Activated CD4-positive, alpha-beta T cell treated with anti-CD3 and anti-CD28 coated beads for 36 hours (primary cell): ENCODE measurements at regions of chr5 and their contacts with region 1.

Region 1: GRCh38 chr5:157328277-157328912 is 62.5 kb downstream of the CYFIP2 start:
- DNase-seq: peak; percentile 77
- ATAC-seq: peak; percentile 97
- H3K4me3 Mint-ChIP-seq: peak overlapping the region; percentile 9
- H3K27ac Mint-ChIP-seq: peak overlapping the region; percentile 85
- H3K4me1 Mint-ChIP-seq: peaks cover 50% of the 10 kb centered on the region
- H3K27me3 Mint-ChIP-seq: no peaks in the 10 kb centered on the region

Region 2: GRCh38 chr5:155987265-155987810 is 1341.1 kb before region 1 on chr5:
- CTCF ChIA-PET with region 1: no interaction called
- POLR2A ChIA-PET with region 1: no interaction called
- intact Hi-C with region 1: no loop called
- DNase-seq: no peak
- ATAC-seq: no peak
- H3K4me3 Mint-ChIP-seq: no peak overlapping the region
- H3K27ac Mint-ChIP-seq: no peak overlapping the region
- H3K4me1 Mint-ChIP-seq: no peaks in the 10 kb centered on the region
- H3K27me3 Mint-ChIP-seq: peaks cover 5% of the 10 kb centered on the region

Region 3: DNA sequence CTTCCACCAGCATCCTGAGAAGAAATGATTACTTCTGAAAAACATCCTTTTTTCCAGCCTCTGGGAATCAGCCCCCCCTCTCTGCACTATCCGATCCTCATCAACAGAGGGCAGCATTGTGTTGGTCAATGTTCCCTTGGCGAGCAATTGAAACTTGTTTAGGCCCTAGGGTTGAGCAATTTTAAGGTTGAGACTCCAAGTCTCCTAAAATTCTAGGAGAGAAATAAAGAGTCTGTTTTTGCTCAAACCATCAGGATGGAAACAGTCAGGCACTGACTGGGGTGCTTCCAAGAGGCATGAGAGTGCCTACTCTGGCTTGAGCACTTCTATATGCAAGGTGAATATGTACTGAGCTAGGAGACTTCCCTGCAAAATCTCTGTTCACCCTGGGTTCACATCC is 74.8 kb before region 1 on chr5:
- CTCF ChIA-PET with region 1: interaction called, 10 read pairs
- POLR2A ChIA-PET with region 1: no interaction called
- intact Hi-C with region 1: no loop called
- DNase-seq: no peak
- ATAC-seq: no peak
- H3K4me3 Mint-ChIP-seq: peak overlapping the region; percentile 10
- H3K27ac Mint-ChIP-seq: peak overlapping the region; percentile 89
- H3K4me1 Mint-ChIP-seq: peaks cover 96% of the 10 kb centered on the region
- H3K27me3 Mint-ChIP-seq: no peaks in the 10 kb centered on the region

Region 4: GRCh38 chr5:157312492-157312891 is 15.9 kb before region 1 on chr5:
- CTCF ChIA-PET with region 1: interaction called, 15 read pairs
- POLR2A ChIA-PET with region 1: no interaction called
- intact Hi-C with region 1: no loop called
- DNase-seq: peak; percentile 76
- ATAC-seq: peak; percentile 95
- H3K4me3 Mint-ChIP-seq: no peak overlapping the region
- H3K27ac Mint-ChIP-seq: peak overlapping the region; percentile 83
- H3K4me1 Mint-ChIP-seq: peaks cover 36% of the 10 kb centered on the region
- H3K27me3 Mint-ChIP-seq: no peaks in the 10 kb centered on the region

Region 5: DNA sequence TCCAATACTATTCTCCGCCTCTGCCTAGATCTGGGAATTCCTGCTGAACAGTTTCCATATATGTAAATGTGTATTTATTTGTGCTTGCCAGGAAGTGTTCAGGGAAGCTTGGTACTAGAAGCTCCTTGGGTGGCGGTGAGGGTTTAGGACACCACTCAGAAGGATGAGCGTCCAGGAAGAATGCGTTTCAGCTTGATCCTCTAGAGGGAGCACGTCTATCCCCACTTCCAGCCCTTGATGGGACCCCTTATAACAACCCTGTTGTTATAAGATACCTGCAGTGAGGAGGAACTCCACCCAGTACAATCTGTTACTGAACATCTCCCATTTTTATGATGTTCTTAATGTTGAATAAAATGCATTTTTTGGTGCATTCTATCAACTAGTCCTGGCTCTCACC is 26.4 kb after region 1 on chr5:
- CTCF ChIA-PET with region 1: interaction called, 12 read pairs
- POLR2A ChIA-PET with region 1: interaction called, 3 read pairs
- intact Hi-C with region 1: no loop called
- DNase-seq: no peak
- ATAC-seq: no peak
- H3K4me3 Mint-ChIP-seq: no peak overlapping the region
- H3K27ac Mint-ChIP-seq: peak overlapping the region; percentile 22
- H3K4me1 Mint-ChIP-seq: peaks cover 53% of the 10 kb centered on the region
- H3K27me3 Mint-ChIP-seq: no peaks in the 10 kb centered on the region

Region 6: DNA sequence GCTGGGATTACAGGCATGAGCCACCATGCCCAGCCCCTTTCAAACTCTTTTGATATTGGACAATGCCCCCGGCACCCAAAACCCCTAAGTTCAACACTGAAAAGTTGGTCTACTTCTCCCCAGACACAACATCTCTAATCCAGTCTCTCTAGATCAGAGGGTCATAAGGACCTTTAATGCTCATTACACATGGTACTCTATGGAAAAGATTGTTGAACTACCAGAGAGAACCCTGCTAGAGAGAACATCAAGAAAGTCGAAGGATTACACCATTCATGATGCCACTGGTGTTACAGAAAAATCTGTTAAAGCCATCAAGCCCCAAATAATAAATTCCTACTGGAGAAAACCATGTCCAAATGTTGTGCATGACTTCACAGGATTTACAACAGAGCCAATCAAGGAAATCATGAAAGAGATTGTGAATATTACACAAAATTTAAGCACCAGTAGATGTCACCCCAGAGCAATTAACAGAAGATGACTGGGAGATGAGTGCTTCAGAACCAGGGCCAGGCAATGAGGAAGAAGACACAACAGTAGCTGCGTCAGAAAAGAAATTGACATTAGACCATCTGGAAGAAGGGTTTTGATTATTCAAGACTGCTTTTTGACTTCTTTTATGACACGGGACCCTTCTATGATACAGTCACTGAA is 103.3 kb after region 1 on chr5:
- CTCF ChIA-PET with region 1: interaction called, 9 read pairs
- POLR2A ChIA-PET with region 1: no interaction called
- intact Hi-C with region 1: loop called (anchors 1 to 2 kb)
- DNase-seq: peak; percentile 53
- ATAC-seq: peak; percentile 99
- H3K4me3 Mint-ChIP-seq: no peak overlapping the region
- H3K27ac Mint-ChIP-seq: no peak overlapping the region
- H3K4me1 Mint-ChIP-seq: peaks cover 5% of the 10 kb centered on the region
- H3K27me3 Mint-ChIP-seq: peaks cover 2% of the 10 kb centered on the region

Region 7: DNA sequence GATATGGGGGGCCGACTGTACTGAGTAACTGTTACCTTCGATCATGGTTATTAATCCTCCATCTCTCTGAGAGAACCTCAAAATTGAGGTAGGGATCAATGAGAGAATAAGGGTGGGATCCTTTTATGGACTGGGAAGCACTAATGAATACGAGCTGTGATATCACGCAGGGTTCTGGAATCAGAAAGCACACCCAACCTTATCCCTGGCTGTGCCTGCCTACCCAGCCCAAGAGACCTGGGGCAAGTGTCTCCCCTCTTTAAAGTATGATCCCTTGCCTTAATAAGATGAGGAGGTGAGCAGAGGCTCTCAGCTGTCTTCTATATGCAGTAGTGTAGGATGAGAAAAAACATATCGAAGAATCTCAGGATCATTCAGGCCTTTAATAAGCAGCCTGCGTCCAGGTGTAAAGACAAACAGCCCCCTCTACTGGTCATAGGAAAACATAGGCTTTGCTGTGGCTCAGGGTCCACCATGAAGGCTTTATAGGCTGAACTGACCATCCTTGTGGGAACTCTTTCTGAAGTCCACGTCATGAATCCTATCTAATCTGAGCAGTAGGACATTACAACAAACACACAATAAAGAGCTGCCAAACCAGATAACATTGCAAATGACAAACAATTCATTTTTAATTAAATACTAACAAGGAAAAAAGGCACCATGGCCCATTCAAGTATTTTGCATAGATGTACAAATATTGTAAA is 148.5 kb after region 1 on chr5:
- CTCF ChIA-PET with region 1: interaction called, 15 read pairs
- POLR2A ChIA-PET with region 1: no interaction called
- intact Hi-C with region 1: loop called (anchors 1 kb)
- DNase-seq: peak; percentile 42
- ATAC-seq: peak; percentile 68
- H3K4me3 Mint-ChIP-seq: no peak overlapping the region
- H3K27ac Mint-ChIP-seq: no peak overlapping the region
- H3K4me1 Mint-ChIP-seq: peaks cover 9% of the 10 kb centered on the region
- H3K27me3 Mint-ChIP-seq: no peaks in the 10 kb centered on the region